RWPE1 (cell line): ENCODE measurements at regions of chr1 and their contacts with region 1.

Region 1: GRCh38 chr1:24536391-24536840 is 19.5 kb upstream of the NCMAP start:
- DNase-seq: no peak
- H3K27ac ChIP-seq: no peak overlapping the region
- CTCF ChIP-seq: no peak

Region 2: GRCh38 chr1:24635195-24635843 is 98.9 kb after region 1 on chr1:
- CTCF ChIA-PET with region 1: interaction called, 10 read pairs
- POLR2A ChIA-PET with region 1: no interaction called
- DNase-seq: peak; percentile 62
- H3K27ac ChIP-seq: no peak overlapping the region
- CTCF ChIP-seq: peak; percentile 72